Caco-2 (cell line): ENCODE measurements at regions of chr1 and their contacts with region 1.

Region 1: DNA sequence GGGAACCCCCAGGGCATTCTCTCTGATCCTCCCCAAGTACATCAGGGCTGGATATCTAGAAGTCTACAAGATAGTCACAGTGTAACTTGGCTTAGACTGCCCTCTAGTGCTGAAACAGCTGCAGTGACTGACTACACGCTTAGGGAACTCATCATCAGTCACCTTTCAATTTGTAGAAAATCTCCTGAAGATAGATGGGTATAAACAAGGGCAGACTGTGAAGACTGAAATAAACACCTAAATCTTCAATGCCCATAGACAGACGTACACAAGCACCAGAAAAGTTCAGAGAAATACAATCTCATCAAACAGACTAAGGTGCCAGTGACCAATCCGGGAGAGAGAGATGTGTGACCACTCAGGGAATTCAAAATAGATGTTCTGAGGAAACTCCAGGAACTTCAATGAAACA is 46.6 kb downstream of the PACC1 start:
- DNase-seq: peak; percentile 73 to 76
- H3K4me3 ChIP-seq: no peak overlapping the region
- H3K4me3 Mint-ChIP-seq: no peak overlapping the region
- H3K27ac Mint-ChIP-seq: peak overlapping the region; percentile 56
- H3K4me1 ChIP-seq: 0 out of 2 replicates have a peak, but pooled peaks cover 5% of the 10 kb centered on the region
- H3K4me1 Mint-ChIP-seq: no peaks in the 10 kb centered on the region
- H3K27me3 ChIP-seq: no peaks in the 10 kb centered on the region
- H3K27me3 Mint-ChIP-seq: no peaks in the 10 kb centered on the region
- CTCF ChIP-seq: peak; percentile 86

Region 2: DNA sequence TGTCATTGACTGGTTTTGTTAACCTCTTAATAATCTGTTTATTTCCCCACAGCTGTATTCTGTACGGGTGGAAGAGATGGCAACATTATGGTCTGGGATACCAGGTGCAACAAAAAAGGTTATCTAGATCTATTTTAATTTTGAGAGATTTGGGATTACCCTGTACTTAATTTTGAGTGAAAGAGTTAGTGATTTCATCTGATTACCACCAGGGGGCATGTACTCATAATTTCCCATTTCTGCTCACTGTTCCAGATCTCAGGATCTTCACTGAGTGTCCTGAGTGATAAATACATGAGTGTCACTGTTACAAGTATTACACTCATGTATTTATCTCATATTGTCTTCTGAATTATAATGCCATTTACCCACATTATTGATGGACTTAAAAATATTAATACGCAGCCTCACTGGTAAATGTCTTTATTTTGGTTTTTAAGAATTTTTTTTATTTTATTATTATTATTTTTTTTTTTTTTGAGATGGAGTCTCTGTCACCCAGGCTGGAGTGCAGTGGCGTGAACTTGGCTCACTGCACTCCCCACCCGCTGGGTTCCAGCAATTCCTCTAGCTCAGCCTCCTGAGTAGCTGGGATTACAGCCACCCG is 305.1 kb before region 1 on chr1:
- CTCF ChIA-PET with region 1: no interaction called
- POLR2A ChIA-PET with region 1: no interaction called
- intact Hi-C with region 1: loop called (anchors 1 kb)
- DNase-seq: peak in 1 of 2 experiments; percentile 13
- H3K4me3 ChIP-seq: no peak overlapping the region
- H3K4me3 Mint-ChIP-seq: no peak overlapping the region
- H3K27ac Mint-ChIP-seq: no peak overlapping the region
- H3K4me1 ChIP-seq: no peaks in the 10 kb centered on the region
- H3K4me1 Mint-ChIP-seq: no peaks in the 10 kb centered on the region
- H3K27me3 ChIP-seq: no peaks in the 10 kb centered on the region
- H3K27me3 Mint-ChIP-seq: no peaks in the 10 kb centered on the region
- CTCF ChIP-seq: peak; percentile 63 to 64

Region 3: GRCh38 chr1:212070720-212071302 is 297.3 kb before region 1 on chr1:
- CTCF ChIA-PET with region 1: interaction called, 6 read pairs
- POLR2A ChIA-PET with region 1: no interaction called
- intact Hi-C with region 1: loop called (anchors 1 kb)
- DNase-seq: peak in 1 of 2 experiments; percentile 36
- H3K4me3 ChIP-seq: no peak overlapping the region
- H3K4me3 Mint-ChIP-seq: no peak overlapping the region
- H3K27ac Mint-ChIP-seq: no peak overlapping the region
- H3K4me1 ChIP-seq: no peaks in the 10 kb centered on the region
- H3K4me1 Mint-ChIP-seq: no peaks in the 10 kb centered on the region
- H3K27me3 ChIP-seq: no peaks in the 10 kb centered on the region
- H3K27me3 Mint-ChIP-seq: no peaks in the 10 kb centered on the region
- CTCF ChIP-seq: peak; percentile 63 to 70

Region 4: DNA sequence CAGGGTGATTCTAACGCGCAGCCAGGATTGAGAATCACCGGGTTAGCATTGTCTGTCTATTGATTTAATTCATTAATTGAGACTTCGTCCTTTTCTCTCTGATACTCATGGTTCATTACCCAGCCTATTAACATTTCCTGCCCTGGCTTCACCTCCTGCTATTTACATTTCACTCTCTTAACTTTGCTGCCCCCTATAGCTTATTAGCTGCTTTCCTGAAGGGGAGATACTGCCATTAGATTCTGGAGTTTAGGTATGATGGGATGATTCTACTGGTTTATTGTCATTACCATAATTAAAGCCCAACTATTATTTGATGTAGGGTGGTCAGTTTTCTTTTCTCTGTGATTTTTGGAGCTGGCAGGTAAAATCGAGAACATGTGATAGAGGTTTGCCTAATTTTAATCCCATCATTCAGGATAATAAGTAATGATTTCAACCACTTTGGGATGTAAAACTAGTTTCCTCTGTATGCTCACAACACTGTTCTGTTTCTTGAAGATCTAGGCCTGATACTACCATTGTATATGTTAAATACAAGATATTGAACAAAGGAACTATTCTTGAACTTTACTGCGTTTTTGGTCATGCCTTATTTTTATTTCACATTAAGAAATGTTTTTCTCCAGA is 76.5 kb before region 1 on chr1:
- CTCF ChIA-PET with region 1: no interaction called
- POLR2A ChIA-PET with region 1: no interaction called
- intact Hi-C with region 1: loop called (anchors 5 kb)
- DNase-seq: peak in 1 of 2 experiments; percentile 58
- H3K4me3 ChIP-seq: no peak overlapping the region
- H3K4me3 Mint-ChIP-seq: no peak overlapping the region
- H3K27ac Mint-ChIP-seq: no peak overlapping the region
- H3K4me1 ChIP-seq: peaks cover 50% of the 10 kb centered on the region
- H3K4me1 Mint-ChIP-seq: peaks cover 27% of the 10 kb centered on the region
- H3K27me3 ChIP-seq: no peaks in the 10 kb centered on the region
- H3K27me3 Mint-ChIP-seq: no peaks in the 10 kb centered on the region
- CTCF ChIP-seq: peak; percentile 53 to 75

Region 5: GRCh38 chr1:212381397-212382035 is 13.4 kb after region 1 on chr1:
- CTCF ChIA-PET with region 1: no interaction called
- POLR2A ChIA-PET with region 1: no interaction called
- intact Hi-C with region 1: no loop called
- DNase-seq: no peak
- H3K4me3 ChIP-seq: no peak overlapping the region
- H3K4me3 Mint-ChIP-seq: no peak overlapping the region
- H3K27ac Mint-ChIP-seq: no peak overlapping the region
- H3K4me1 ChIP-seq: no peaks in the 10 kb centered on the region
- H3K4me1 Mint-ChIP-seq: no peaks in the 10 kb centered on the region
- H3K27me3 ChIP-seq: no peaks in the 10 kb centered on the region
- H3K27me3 Mint-ChIP-seq: no peaks in the 10 kb centered on the region
- CTCF ChIP-seq: peak in 1 of 2 experiments; percentile 3